ENCODE measurements at regions of chr10 and their contacts with region 1.

Region 1: GRCh38 chr10:127853868-127854768 is 38.6 kb downstream of the CLRN3 start:
- DNase-seq: peak; percentile 71
- ATAC-seq: peak; percentile 95

Region 2: GRCh38 chr10:127715782-127716378 is 138.2 kb before region 1 on chr10:
- intact Hi-C with region 1: loop called (anchors 2 kb)
- DNase-seq: no peak
- ATAC-seq: no peak

Region 3: GRCh38 chr10:128069351-128070051 is 215.4 kb after region 1 on chr10:
- intact Hi-C with region 1: no loop called
- DNase-seq: peak; percentile 71
- ATAC-seq: peak; percentile 79

Region 4: DNA sequence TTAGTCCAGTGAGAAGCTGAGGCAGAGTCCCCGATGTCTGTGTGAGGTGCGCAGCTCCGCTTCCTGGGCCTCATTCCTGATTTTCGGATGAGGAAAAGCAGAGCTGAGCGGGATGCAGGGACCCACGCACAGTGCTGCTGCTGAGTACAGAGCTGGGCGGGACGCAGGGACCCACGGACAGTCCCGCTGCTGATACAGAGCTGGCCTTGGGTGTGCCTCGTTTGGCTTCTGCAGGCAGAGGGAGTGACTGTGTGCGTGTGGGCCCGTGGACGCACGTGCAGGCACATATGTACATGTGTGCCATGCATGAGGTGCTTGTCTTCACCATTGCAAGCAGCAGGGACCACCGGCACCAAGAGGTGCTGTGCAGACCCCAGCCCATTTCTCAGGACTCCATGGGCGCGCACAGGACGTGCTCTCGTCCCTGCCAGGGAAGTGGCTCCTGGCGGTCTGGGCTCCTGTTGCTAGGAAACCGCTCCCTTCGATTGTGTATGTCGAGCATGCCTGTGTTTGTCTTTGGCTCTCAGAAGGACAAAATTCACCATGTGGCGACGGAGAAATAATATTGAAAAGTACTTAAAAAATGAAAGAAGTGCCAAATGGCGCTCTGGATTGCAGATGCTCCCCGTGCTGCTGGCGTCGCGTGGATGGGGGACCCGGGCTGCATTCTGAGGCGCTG is 575.9 kb after region 1 on chr10:
- intact Hi-C with region 1: no loop called
- DNase-seq: no peak
- ATAC-seq: no peak

Measured in Right ventricle myocardium superior (tissue), 1 donor.